Transverse colon (tissue), 4 donors: ENCODE measurements at regions of chrX and their contacts with region 1.

Region 1: DNA sequence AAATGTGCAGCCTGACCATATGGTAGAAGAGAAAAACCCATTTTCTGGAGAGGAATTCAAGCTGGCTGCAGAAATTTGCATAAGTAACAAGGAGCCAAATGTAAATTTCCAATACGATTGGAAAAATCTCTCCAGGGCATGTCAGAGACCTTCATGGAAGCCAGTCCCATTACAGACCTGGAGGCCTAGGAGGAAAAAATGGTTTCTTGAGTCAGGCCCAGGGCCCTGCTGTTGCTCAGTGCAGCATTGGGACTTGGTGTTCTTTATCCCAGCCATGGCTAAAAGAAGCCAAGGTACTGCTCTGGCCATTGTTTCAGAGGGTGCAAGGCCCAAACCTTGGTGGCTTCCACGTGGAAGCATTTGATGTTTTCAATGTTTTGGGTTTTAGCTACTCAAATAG is 70.6 kb downstream of the MAGEC2 start:
- DNase-seq: no peak
- H3K4me3 ChIP-seq: no peak overlapping the region
- H3K27ac ChIP-seq: no peak overlapping the region
- H3K4me1 ChIP-seq: no peaks in the 10 kb centered on the region
- H3K27me3 ChIP-seq: no peaks in the 10 kb centered on the region
- CTCF ChIP-seq: no peak
- EP300 ChIP-seq: no peak
- POLR2A ChIP-seq: no peak

Region 2: GRCh38 chrX:141941234-141941633 is 193.3 kb before region 1 on chrX:
- in situ Hi-C with region 1: no loop called
- intact Hi-C with region 1: no loop called
- DNase-seq: no peak
- H3K4me3 ChIP-seq: no peak overlapping the region
- H3K27ac ChIP-seq: no peak overlapping the region
- H3K4me1 ChIP-seq: no peaks in the 10 kb centered on the region
- H3K27me3 ChIP-seq: no peaks in the 10 kb centered on the region
- CTCF ChIP-seq: no peak
- EP300 ChIP-seq: no peak
- POLR2A ChIP-seq: no peak

Region 3: GRCh38 chrX:142043196-142043595 is 91.3 kb before region 1 on chrX:
- in situ Hi-C with region 1: no loop called
- intact Hi-C with region 1: no loop called
- DNase-seq: no peak
- H3K4me3 ChIP-seq: no peak overlapping the region
- H3K27ac ChIP-seq: no peak overlapping the region
- H3K4me1 ChIP-seq: no peaks in the 10 kb centered on the region
- H3K27me3 ChIP-seq: no peaks in the 10 kb centered on the region
- CTCF ChIP-seq: no peak
- EP300 ChIP-seq: no peak
- POLR2A ChIP-seq: no peak

Region 4: GRCh38 chrX:142156567-142156966 is 22.0 kb after region 1 on chrX:
- in situ Hi-C with region 1: no loop called
- intact Hi-C with region 1: loop called (anchors 1 kb)
- DNase-seq: no peak
- H3K4me3 ChIP-seq: no peak overlapping the region
- H3K27ac ChIP-seq: no peak overlapping the region
- H3K4me1 ChIP-seq: no peaks in the 10 kb centered on the region
- H3K27me3 ChIP-seq: no peaks in the 10 kb centered on the region
- CTCF ChIP-seq: no peak
- EP300 ChIP-seq: no peak
- POLR2A ChIP-seq: no peak

Region 5: GRCh38 chrX:142186103-142186502 is 51.6 kb after region 1 on chrX:
- in situ Hi-C with region 1: no loop called
- intact Hi-C with region 1: no loop called
- DNase-seq: no peak
- H3K4me3 ChIP-seq: no peak overlapping the region
- H3K27ac ChIP-seq: no peak overlapping the region
- H3K4me1 ChIP-seq: no peaks in the 10 kb centered on the region
- H3K27me3 ChIP-seq: no peaks in the 10 kb centered on the region
- CTCF ChIP-seq: no peak
- EP300 ChIP-seq: no peak
- POLR2A ChIP-seq: no peak

Region 6: DNA sequence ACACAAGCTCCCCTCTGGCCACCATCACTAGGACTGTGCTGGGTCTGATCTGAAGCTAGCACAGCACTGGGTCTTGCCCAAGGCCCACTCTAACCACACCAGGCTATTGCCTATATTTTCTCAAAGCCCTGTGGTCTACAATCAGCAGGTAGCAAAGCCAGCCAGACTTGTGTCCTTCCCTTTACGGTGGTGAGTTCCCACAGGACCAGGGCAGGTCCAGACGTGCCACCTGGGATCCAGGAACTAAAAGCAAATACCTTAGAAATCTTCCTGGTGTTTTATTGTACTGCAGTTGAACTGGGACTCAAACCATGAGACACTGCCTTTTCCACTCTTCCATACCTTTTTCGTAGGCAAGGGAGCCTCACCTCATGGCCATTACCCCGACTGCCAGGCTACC is 79.5 kb after region 1 on chrX:
- in situ Hi-C with region 1: no loop called
- intact Hi-C with region 1: no loop called
- DNase-seq: no peak
- H3K4me3 ChIP-seq: no peak overlapping the region
- H3K27ac ChIP-seq: no peak overlapping the region
- H3K4me1 ChIP-seq: no peaks in the 10 kb centered on the region
- H3K27me3 ChIP-seq: no peaks in the 10 kb centered on the region
- CTCF ChIP-seq: no peak
- EP300 ChIP-seq: no peak
- POLR2A ChIP-seq: no peak